AG04450 (cell line): ENCODE measurements at regions of chr3 and their contacts with region 1.

Region 1: DNA sequence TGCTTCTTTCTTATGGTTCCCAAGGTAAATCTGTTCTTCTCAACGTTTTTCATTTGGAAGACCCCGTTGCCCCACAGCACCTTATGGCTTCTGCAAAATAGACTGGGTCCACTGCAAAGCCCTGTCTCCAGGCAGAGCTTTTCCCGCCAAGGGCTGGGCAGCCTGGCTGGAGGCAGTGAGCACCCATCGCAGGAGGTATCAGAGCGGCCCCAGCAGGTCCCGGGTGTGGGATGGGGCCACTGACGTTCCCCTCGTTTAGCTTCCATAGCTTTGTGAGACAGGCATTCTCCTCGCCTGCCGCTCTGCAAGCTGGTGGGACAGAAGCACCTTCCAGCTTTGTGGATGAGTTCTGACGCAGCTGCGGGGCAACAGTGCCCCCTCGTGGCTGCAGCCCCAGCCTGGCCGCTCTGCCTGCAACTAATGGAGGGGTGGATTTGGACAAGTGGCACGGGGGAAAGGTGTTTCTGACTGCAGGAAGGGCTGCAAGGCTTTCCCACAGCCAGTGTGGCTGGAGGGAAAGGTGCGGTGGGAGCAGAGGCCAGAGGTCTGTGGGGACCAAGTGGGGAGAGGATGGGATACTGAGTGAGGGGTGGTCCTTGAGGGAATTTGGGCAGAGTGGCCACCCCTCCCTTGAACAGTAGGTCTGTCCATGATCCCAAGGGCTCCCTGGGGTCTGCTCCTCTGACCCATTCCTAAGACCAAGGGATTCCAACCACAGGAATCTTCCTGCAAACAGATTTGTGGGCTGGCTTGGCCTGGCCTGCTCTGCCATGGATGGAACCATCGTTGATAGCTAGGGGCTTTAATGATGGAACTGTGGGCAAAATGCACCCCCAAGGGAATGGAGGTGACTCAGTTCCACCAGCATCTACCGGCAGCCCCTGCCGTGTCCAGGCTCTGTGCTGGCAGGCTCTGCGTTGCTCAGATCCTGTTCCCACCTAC is 99.4 kb downstream of the FBLN2 start:
- DNase-seq: peak; percentile 58
- H3K4me3 ChIP-seq: no peak overlapping the region
- H3K27ac ChIP-seq: no peak overlapping the region
- H3K27me3 ChIP-seq: peaks cover 10% of the 10 kb centered on the region
- CTCF ChIP-seq: peak; percentile 100

Region 2: GRCh38 chr3:13452490-13453335 is 195.6 kb before region 1 on chr3:
- CTCF ChIA-PET with region 1: interaction called, 26 read pairs
- POLR2A ChIA-PET with region 1: no interaction called
- DNase-seq: peak; percentile 11
- H3K4me3 ChIP-seq: no peak overlapping the region
- H3K27ac ChIP-seq: no peak overlapping the region
- H3K27me3 ChIP-seq: no peaks in the 10 kb centered on the region
- CTCF ChIP-seq: peak; percentile 73

Region 3: GRCh38 chr3:13484851-13485590 is 163.3 kb before region 1 on chr3:
- CTCF ChIA-PET with region 1: interaction called, 29 read pairs
- POLR2A ChIA-PET with region 1: no interaction called
- DNase-seq: no peak
- H3K4me3 ChIP-seq: no peak overlapping the region
- H3K27ac ChIP-seq: no peak overlapping the region
- H3K27me3 ChIP-seq: no peaks in the 10 kb centered on the region
- CTCF ChIP-seq: no peak

Region 4: DNA sequence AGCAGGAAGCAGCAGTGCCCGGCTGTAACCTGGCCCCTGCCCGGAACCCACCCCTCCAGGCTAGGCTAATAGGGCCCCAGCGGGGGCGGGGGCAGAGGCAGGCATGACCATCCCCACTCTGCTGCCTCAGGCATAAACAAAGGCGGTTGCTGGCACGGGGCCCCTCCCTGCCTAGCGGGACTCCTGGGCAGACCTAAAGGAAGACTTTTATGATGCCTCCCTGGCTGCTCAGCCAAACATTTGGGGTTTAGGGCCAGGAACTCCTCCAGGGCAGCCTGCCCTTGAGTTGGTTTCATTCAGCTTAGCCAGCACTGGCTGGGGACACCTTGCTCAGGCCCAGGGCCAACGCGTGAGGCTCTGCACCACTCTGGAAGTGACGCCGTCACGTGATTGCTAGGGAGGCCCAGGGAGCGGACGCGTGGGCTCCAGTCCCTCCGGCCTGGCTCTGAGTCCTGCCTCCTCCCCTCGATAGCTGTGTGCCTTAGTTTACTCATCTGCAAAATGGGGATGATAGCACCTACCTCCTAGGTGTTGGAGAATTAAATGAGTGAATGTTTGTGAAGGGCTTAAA is 140.5 kb before region 1 on chr3:
- CTCF ChIA-PET with region 1: interaction called, 695 read pairs
- POLR2A ChIA-PET with region 1: no interaction called
- DNase-seq: no peak
- H3K4me3 ChIP-seq: no peak overlapping the region
- H3K27ac ChIP-seq: no peak overlapping the region
- H3K27me3 ChIP-seq: peaks cover 3% of the 10 kb centered on the region
- CTCF ChIP-seq: no peak

Region 5: GRCh38 chr3:13637311-13637891 is 10.9 kb before region 1 on chr3:
- CTCF ChIA-PET with region 1: interaction called, 26 read pairs
- POLR2A ChIA-PET with region 1: no interaction called
- DNase-seq: no peak
- H3K4me3 ChIP-seq: no peak overlapping the region
- H3K27ac ChIP-seq: no peak overlapping the region
- H3K27me3 ChIP-seq: peaks cover 4% of the 10 kb centered on the region
- CTCF ChIP-seq: no peak